ENCODE measurements at regions of chr15 and their contacts with region 1.

Region 1: GRCh38 chr15:34927726-34928125 is 41.8 kb downstream of the AQR start:
- DNase-seq: no peak
- H3K4me3 ChIP-seq: no peak overlapping the region
- H3K27ac ChIP-seq: no peak overlapping the region
- H3K4me1 ChIP-seq: no peaks in the 10 kb centered on the region
- H3K27me3 ChIP-seq: no peaks in the 10 kb centered on the region
- CTCF ChIP-seq: no peak
- POLR2A ChIP-seq: no peak

Region 2: GRCh38 chr15:34708422-34708821 is 219.3 kb before region 1 on chr15:
- intact Hi-C with region 1: loop called (anchors 2 kb)
- DNase-seq: no peak
- H3K4me3 ChIP-seq: no peak overlapping the region
- H3K27ac ChIP-seq: no peak overlapping the region
- H3K4me1 ChIP-seq: no peaks in the 10 kb centered on the region
- H3K27me3 ChIP-seq: no peaks in the 10 kb centered on the region
- CTCF ChIP-seq: peak; percentile 28 to 53 (median 49)
- POLR2A ChIP-seq: no peak

Region 3: GRCh38 chr15:34993877-34994276 is 66.2 kb after region 1 on chr15:
- intact Hi-C with region 1: no loop called
- DNase-seq: no peak
- H3K4me3 ChIP-seq: no peak overlapping the region
- H3K27ac ChIP-seq: no peak overlapping the region
- H3K4me1 ChIP-seq: no peaks in the 10 kb centered on the region
- H3K27me3 ChIP-seq: no peaks in the 10 kb centered on the region
- CTCF ChIP-seq: no peak
- POLR2A ChIP-seq: no peak